Sigmoid colon (tissue), 7 donors: ENCODE measurements at regions of chr1 and their contacts with region 1.

Region 1: DNA sequence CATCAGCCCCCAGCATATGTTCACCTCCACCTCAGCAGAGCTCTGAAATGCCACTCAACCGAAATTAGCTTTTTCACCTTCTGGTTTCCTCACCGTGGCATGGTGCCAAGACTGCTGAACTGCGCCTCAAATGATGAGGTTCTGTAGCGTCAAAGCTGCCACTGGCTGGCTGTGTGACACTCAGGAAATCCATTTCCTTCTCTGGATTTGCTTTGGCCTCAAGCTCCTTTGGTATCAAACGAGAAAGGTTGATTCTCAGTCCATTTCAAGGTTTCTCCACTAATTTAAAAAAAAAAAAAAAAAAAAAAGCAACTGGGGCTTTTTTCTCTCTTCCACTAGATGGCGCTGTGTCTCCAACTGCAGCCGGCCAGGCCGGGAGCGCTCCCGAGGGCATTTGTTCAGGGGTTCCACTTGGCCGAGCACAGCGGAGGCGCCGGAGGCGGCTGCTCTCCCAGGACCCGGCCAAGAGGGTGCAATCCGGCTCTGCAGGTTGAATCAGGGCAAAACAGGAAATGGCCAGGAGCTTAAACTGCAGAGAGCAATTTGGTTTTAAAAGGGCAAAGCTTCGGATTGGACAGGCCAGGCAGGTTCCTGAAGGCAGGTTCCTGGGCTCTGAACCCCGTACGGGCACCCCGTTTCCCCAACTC is 26.5 kb upstream of the PLA2G2C start:
- DNase-seq: peak; percentile 78
- H3K4me3 ChIP-seq: no peak overlapping the region
- H3K27ac ChIP-seq: no peak overlapping the region
- H3K4me1 ChIP-seq: peaks cover 0 to 10% (median 8%) of the 10 kb centered on the region in 4 donors
- H3K27me3 ChIP-seq: peaks cover 0 to 7% (median 0%) of the 10 kb centered on the region in 3 donors
- CTCF ChIP-seq: peak; percentile 46 to 58 (median 56)
- EP300 ChIP-seq: no peak
- POLR2A ChIP-seq: no peak

Region 2: GRCh38 chr1:19918057-19918456 is 294.8 kb before region 1 on chr1:
- intact Hi-C with region 1: loop called (anchors 5 kb)
- DNase-seq: peak; percentile 89
- H3K4me3 ChIP-seq: no peak overlapping the region
- H3K27ac ChIP-seq: no peak overlapping the region
- H3K4me1 ChIP-seq: no peaks in the 10 kb centered on the region
- H3K27me3 ChIP-seq: no peaks in the 10 kb centered on the region
- CTCF ChIP-seq: peak; percentile 72 to 88 (median 85)
- EP300 ChIP-seq: no peak
- POLR2A ChIP-seq: no peak

Region 3: DNA sequence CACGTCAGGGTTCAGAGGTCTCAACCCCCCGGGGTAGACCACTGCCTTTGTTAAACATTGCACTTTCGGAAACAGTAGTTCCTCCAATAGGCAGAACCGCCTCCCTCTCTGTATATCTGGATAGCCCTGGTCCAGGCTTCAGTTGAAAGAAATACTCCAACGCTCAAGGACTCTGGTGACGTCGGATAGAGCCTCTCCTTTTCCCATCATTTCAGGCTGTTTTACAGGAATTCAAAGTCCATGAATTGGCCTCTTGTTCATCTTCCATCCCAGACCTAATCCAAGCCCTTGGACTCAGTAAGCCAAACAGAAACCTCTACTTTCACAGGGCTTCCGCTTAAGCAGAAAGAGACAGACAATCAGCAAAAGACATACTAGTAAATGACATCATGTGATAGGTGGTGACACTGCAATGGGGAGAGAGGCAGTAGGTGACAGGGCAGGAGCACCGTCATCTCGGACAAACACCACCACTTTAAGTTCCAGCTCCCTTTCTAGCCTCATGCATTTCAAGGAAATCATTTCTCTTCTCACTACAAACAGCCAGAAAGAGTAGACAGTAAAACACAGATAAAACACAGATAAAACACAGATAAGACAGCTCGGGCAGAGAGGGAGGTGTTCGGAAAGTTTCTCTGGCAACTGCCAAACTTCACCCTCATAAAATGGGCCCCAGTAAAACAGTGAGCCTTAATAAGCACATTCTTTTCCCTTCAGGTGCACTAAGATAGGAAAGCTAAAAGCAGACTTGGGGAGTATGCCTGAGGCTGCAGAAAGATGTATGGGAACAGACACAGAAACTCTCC is 231.1 kb before region 1 on chr1:
- intact Hi-C with region 1: loop called (anchors 10 kb)
- DNase-seq: no peak
- H3K4me3 ChIP-seq: no peak overlapping the region
- H3K27ac ChIP-seq: peak overlapping the region in 3 of 4 donors; percentile 45 to 71 (median 69)
- H3K4me1 ChIP-seq: peaks cover 0 to 45% (median 39%) of the 10 kb centered on the region in 4 donors
- H3K27me3 ChIP-seq: no peaks in the 10 kb centered on the region
- CTCF ChIP-seq: no peak
- EP300 ChIP-seq: no peak
- POLR2A ChIP-seq: no peak

Region 4: DNA sequence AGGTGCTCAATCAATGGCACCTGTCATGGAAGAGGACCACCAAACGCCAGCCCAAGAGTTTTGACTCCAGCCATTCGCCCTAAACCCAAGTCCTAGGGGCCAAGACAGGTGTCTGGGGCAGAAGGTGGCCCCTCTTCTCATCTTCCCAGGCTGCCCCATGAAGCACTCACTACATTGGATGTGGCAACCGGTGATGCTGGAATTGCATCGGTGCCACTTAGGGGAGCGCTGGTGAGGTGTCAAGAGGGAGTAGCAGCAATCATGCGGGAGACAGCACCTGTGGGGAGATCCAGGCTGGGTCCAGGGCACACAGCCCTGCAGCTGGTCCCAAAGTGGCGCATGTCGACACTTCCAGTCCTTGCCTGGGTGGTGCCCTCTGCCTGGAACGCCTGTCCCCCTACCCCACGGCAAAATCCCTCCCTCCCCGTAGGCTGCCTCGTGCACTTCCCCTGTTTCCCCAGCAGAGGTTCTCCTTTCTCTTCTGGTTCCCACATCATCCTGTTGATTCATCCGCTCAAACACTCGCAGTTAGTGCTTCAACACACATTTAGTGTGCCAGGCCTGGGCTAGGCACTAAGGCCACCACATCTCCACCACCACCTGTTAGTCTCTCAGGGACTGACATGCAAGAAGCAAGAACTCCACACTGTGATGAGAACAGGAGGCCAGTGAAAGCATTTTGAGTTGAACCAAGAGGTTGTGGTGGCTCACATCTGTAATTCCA is 112.0 kb before region 1 on chr1:
- intact Hi-C with region 1: loop called (anchors 5 kb)
- DNase-seq: peak; percentile 70
- H3K4me3 ChIP-seq: no peak overlapping the region
- H3K27ac ChIP-seq: no peak overlapping the region
- H3K4me1 ChIP-seq: peaks cover 0 to 11% (median 2%) of the 10 kb centered on the region in 4 donors
- H3K27me3 ChIP-seq: no peaks in the 10 kb centered on the region
- CTCF ChIP-seq: peak; percentile 86 to 90 (median 88)
- EP300 ChIP-seq: no peak
- POLR2A ChIP-seq: no peak

Region 5: DNA sequence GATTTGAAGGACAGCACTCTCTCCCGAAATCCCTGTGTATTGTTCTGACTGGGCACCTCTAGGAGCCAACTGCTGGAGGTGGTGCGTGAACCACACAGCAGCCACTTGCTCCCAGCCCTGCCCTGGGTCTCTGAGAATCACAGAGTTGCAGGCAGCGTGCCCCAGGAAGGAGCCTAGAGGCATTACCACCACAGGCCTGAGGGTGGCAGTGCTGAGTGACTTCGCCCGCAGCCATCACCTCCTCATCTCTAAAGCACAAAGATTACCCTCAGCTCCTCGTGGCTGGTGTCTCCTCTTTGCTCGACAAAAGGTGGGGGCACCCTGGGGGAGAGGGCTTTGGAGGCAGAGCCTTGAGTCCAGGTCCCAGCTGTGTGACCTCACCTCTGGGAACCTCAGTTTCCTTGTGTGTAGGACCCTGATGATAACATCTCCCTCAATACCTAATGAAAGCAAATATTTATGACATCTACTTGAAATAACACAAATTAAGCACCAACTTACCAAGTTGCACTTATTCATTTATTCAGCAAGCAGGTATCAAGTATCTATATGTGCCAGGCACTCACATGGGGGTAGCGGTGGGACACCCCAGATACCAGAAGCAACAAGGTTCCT is 164.2 kb after region 1 on chr1:
- intact Hi-C with region 1: loop called (anchors 5 kb)
- DNase-seq: peak; percentile 73
- H3K4me3 ChIP-seq: no peak overlapping the region
- H3K27ac ChIP-seq: no peak overlapping the region
- H3K4me1 ChIP-seq: no peaks in the 10 kb centered on the region
- H3K27me3 ChIP-seq: peaks cover 0 to 26% (median 10%) of the 10 kb centered on the region in 3 donors
- CTCF ChIP-seq: peak; percentile 6 to 82 (median 75)
- EP300 ChIP-seq: no peak
- POLR2A ChIP-seq: no peak

Region 6: GRCh38 chr1:20430355-20431175 is 217.8 kb after region 1 on chr1:
- intact Hi-C with region 1: loop called (anchors 5 kb)
- DNase-seq: no peak
- H3K4me3 ChIP-seq: no peak overlapping the region
- H3K27ac ChIP-seq: no peak overlapping the region
- H3K4me1 ChIP-seq: no peaks in the 10 kb centered on the region
- H3K27me3 ChIP-seq: peaks cover 0 to 33% (median 5%) of the 10 kb centered on the region in 3 donors
- CTCF ChIP-seq: peak in 3 of 4 experiments; percentile 20 to 46 (median 42)
- EP300 ChIP-seq: no peak
- POLR2A ChIP-seq: no peak

Region 7: GRCh38 chr1:20493839-20494608 is 281.2 kb after region 1 on chr1:
- intact Hi-C with region 1: loop called (anchors 1 kb)
- DNase-seq: peak; percentile 92
- H3K4me3 ChIP-seq: no peak overlapping the region
- H3K27ac ChIP-seq: no peak overlapping the region
- H3K4me1 ChIP-seq: peaks cover 0 to 8% (median 7%) of the 10 kb centered on the region in 4 donors
- H3K27me3 ChIP-seq: no peaks in the 10 kb centered on the region
- CTCF ChIP-seq: peak; percentile 94 to 99 (median 98)
- EP300 ChIP-seq: no peak
- POLR2A ChIP-seq: no peak